CD4-positive, alpha-beta T cell (primary cell): ENCODE measurements at regions of chr12 and their contacts with region 1.

Region 1: GRCh38 chr12:6215932-6216494 is 15.8 kb downstream of the CD9 start:
- DNase-seq: no peak
- ATAC-seq: no peak
- H3K4me3 ChIP-seq: no peak overlapping the region
- H3K4me3 Mint-ChIP-seq: no peak overlapping the region
- H3K27ac ChIP-seq: no peak overlapping the region
- H3K27ac Mint-ChIP-seq: no peak overlapping the region
- H3K4me1 ChIP-seq: peaks cover 5% of the 10 kb centered on the region
- H3K4me1 Mint-ChIP-seq: peaks cover 16% of the 10 kb centered on the region
- H3K27me3 ChIP-seq: peaks cover 0 to 2% of the 10 kb centered on the region in 2 experiments
- H3K27me3 Mint-ChIP-seq: no peaks in the 10 kb centered on the region
- CTCF ChIP-seq: no peak

Region 2: GRCh38 chr12:6914246-6914946 is 698.4 kb after region 1 on chr12 and contains the start of gene ENO2:
- CTCF ChIA-PET with region 1: no interaction called
- POLR2A ChIA-PET with region 1: no interaction called
- intact Hi-C with region 1: no loop called
- DNase-seq: peak; percentile 72 to 93 (median 86)
- ATAC-seq: peak; percentile 93
- H3K4me3 ChIP-seq: peak within 1 kb of the TSS; percentile 65
- H3K4me3 Mint-ChIP-seq: peak within 1 kb of the TSS; percentile 94
- H3K27ac ChIP-seq: peak within 1 kb of the TSS; percentile 84 to 90
- H3K27ac Mint-ChIP-seq: peak within 1 kb of the TSS; percentile 82
- H3K4me1 ChIP-seq: peaks cover 32% of the 10 kb centered on the region
- H3K4me1 Mint-ChIP-seq: peaks cover 31% of the 10 kb centered on the region
- H3K27me3 ChIP-seq: no peaks in the 10 kb centered on the region
- H3K27me3 Mint-ChIP-seq: no peaks in the 10 kb centered on the region
- CTCF ChIP-seq: no peak
- total RNA-seq, gene ENO2: 85.6 to 103 TPM

Region 3: GRCh38 chr12:7175493-7175892 is 959.5 kb after region 1 on chr12:
- CTCF ChIA-PET with region 1: no interaction called
- POLR2A ChIA-PET with region 1: no interaction called
- intact Hi-C with region 1: loop called in 1 of 2 experiments (anchors 10 kb)
- DNase-seq: no peak
- ATAC-seq: no peak
- H3K4me3 ChIP-seq: no peak overlapping the region
- H3K4me3 Mint-ChIP-seq: no peak overlapping the region
- H3K27ac ChIP-seq: no peak overlapping the region
- H3K27ac Mint-ChIP-seq: no peak overlapping the region
- H3K4me1 ChIP-seq: no peaks in the 10 kb centered on the region
- H3K4me1 Mint-ChIP-seq: no peaks in the 10 kb centered on the region
- H3K27me3 ChIP-seq: peaks cover 5 to 8% of the 10 kb centered on the region in 2 experiments
- H3K27me3 Mint-ChIP-seq: peaks cover 34% of the 10 kb centered on the region
- CTCF ChIP-seq: no peak